Transverse colon (tissue), 4 donors: ENCODE measurements at regions of chr2 and their contacts with region 1.

Region 1: GRCh38 chr2:158903711-158904443 is 64.6 kb upstream of the TANC1 start:
- DNase-seq: no peak
- H3K4me3 ChIP-seq: no peak overlapping the region
- H3K27ac ChIP-seq: no peak overlapping the region
- H3K4me1 ChIP-seq: peaks cover 0 to 14% (median 0%) of the 10 kb centered on the region in 4 donors
- H3K27me3 ChIP-seq: no peaks in the 10 kb centered on the region
- CTCF ChIP-seq: no peak
- EP300 ChIP-seq: no peak
- POLR2A ChIP-seq: no peak

Region 2: DNA sequence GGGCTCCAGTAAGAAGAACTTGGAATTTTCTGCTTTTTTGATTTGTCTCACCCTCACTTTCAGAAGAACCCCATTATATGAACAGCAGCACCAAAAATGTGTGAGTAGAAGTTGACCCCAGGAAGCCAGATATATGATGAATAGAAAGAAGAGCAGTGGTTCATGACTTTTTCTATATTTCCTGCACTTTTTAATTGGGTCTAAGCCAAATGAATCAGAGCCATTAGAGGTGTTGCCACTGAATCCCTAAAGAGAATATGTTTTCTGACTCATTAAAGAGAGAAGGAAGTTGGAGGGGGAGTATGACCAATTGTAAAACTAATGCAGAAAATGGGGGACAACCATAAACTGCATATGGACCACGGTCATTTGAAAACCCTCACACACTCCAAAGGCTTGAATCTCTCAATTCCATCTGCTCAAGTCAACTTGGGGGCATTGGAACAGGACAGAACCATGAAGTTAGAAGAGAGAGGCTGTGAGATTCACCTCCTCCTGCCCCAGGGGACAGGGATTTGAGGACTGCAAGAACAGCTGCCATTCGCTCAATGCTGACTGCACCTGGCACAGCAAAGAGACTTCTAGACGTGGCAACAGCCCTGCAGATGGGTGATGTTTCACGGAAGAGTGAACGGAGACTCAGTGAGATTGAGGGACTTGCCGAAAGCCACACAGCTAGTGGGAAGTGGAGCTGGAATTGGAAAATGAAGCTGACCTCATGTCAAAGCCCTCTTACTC is 105.7 kb before region 1 on chr2:
- in situ Hi-C with region 1: no loop called
- intact Hi-C with region 1: no loop called
- DNase-seq: no peak
- H3K4me3 ChIP-seq: no peak overlapping the region
- H3K27ac ChIP-seq: no peak overlapping the region
- H3K4me1 ChIP-seq: no peaks in the 10 kb centered on the region
- H3K27me3 ChIP-seq: peaks cover 4% of the 10 kb centered on the region
- CTCF ChIP-seq: no peak
- EP300 ChIP-seq: no peak
- POLR2A ChIP-seq: no peak

Region 3: GRCh38 chr2:159111346-159111924 is 207.6 kb after region 1 on chr2:
- in situ Hi-C with region 1: loop called in 3 of 4 experiments (anchors 5 to 10 kb)
- intact Hi-C with region 1: no loop called
- DNase-seq: no peak
- H3K4me3 ChIP-seq: no peak overlapping the region
- H3K27ac ChIP-seq: no peak overlapping the region
- H3K4me1 ChIP-seq: peaks cover 0 to 7% (median 0%) of the 10 kb centered on the region in 4 donors
- H3K27me3 ChIP-seq: no peaks in the 10 kb centered on the region
- CTCF ChIP-seq: no peak
- EP300 ChIP-seq: no peak
- POLR2A ChIP-seq: no peak

Region 4: DNA sequence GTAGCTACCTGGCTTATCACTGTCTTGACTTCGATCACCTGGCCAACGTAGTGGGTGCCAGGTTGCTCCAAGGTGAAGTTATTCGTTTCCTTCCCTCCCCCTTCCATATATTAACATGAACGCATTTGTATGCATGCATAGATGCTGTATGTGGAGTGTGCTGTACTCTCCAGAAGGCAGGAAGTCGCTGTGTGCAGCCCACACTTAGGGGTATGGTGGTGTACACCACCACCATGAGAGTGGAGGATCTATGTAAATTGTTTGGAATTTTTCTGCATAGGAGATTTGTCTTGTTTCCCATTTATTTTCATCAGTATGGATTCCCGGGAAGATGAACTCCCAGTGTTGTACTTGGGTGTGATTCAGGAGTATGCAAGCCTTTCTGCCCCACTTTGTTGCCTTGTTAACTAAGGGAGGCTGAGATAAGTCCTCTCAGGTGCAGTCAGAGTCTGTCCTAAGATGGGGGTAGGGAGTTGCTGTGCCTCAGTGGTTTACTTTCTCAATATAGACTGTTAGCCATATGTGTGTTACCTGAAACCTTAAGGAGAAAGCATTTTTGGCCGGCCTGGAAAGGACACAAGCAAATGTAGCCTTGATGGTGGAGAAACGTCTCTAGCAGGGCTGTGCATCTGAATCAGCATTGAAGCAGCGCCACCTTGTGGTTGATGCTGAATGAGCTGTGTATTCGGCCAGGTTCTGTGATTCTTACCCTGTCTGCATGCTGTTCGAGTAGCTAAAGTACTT is 214.4 kb after region 1 on chr2:
- in situ Hi-C with region 1: loop called (anchors 5 to 10 kb)
- intact Hi-C with region 1: loop called (anchors 1 kb)
- DNase-seq: peak; percentile 88
- H3K4me3 ChIP-seq: no peak overlapping the region
- H3K27ac ChIP-seq: peak overlapping the region in 2 of 4 donors; percentile 11 to 16
- H3K4me1 ChIP-seq: peaks cover 0 to 29% (median 8%) of the 10 kb centered on the region in 4 donors
- H3K27me3 ChIP-seq: no peaks in the 10 kb centered on the region
- CTCF ChIP-seq: peak; percentile 87 to 93 (median 89)
- EP300 ChIP-seq: no peak
- POLR2A ChIP-seq: no peak

Region 5: DNA sequence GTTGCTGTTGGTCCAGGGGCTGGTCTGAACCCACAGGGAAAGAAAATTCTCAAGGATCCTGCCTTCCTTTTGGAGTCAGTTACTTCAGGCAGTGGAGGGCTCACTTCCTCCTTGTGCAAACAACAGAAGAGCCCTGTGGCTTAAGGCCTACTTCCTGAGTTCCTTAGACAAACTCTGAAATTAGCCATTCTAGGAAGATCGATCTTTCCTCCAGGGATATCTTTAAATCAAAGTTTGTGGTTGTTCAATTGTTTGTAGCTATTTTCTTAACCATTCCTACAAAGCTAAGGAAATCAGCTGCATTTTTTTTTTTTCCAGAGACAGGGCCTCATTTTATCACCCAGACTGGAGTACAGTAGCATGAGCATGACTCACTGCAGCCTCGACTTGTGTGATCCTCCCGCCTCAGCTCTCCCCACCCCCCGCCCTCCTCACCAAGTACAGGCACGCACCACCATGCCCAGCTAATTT is 220.6 kb after region 1 on chr2:
- in situ Hi-C with region 1: loop called in 3 of 4 experiments (anchors 5 to 10 kb)
- intact Hi-C with region 1: no loop called
- DNase-seq: peak; percentile 63
- H3K4me3 ChIP-seq: no peak overlapping the region
- H3K27ac ChIP-seq: peak overlapping the region; percentile 78 to 82 (median 79)
- H3K4me1 ChIP-seq: peaks cover 12 to 45% (median 27%) of the 10 kb centered on the region in 4 donors
- H3K27me3 ChIP-seq: no peaks in the 10 kb centered on the region
- CTCF ChIP-seq: no peak
- EP300 ChIP-seq: no peak
- POLR2A ChIP-seq: no peak